GM12878 (cell line): ENCODE measurements at regions of chr4 and their contacts with region 1.

Region 1: DNA sequence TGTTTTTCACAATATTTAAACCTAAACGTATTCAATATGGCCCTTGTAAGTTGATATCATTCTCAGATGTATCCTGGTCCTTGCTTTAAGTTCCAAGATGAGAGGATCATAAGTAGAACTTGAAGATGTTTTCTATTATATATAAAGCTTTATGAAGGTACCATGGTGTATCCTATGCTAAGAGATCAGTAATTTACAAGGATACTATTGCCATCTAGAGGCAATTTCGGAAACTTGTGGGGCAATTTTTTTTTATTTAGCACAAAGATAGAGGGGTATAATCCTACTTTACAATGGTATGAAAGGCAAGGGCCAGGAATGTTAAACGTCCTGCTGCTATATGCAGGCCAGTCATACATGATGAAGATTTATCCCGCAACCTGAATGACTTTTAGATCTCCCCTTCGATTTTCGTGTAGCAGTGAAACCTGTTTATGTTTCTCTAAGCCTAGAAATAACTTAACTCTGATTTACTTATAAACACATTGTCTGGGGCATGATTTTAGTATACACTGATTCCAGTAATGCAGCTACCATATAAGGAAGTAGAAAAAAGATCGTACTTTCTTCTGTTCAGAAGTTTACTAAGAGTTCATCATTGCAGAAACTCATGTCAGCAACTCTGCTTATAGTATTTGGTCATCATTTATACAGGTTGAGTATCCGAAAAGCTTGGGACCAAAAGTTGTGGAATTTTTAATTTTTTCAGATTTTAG is 2.6 kb downstream of the SLC25A31 start:
- DNase-seq: peak; percentile 12
- ATAC-seq: peak; percentile 92
- H3K4me3 ChIP-seq: no peak overlapping the region
- H3K27ac ChIP-seq: no peak overlapping the region
- H3K4me1 ChIP-seq: no peaks in the 10 kb centered on the region
- H3K27me3 ChIP-seq: no peaks in the 10 kb centered on the region; a peak in 1 of 4 replicates
- CTCF ChIP-seq: peak; percentile 44 to 73 (median 58); a peak in 5 of 6 replicates
- EP300 ChIP-seq: no peak
- POLR2A ChIP-seq: no peak
- RAD21 ChIP-seq: peak; percentile 83

Region 2: GRCh38 chr4:127538016-127538415 is 194.8 kb before region 1 on chr4:
- CTCF ChIA-PET with region 1: interaction called, 4 read pairs
- POLR2A ChIA-PET with region 1: no interaction called
- RAD21 ChIA-PET with region 1: no interaction called
- SMC1A ChIA-PET with region 1: no interaction called
- in situ Hi-C with region 1: no loop called
- intact Hi-C with region 1: loop called (anchors 5 kb)
- DNase-seq: no peak
- ATAC-seq: no peak
- H3K4me3 ChIP-seq: no peak overlapping the region
- H3K27ac ChIP-seq: no peak overlapping the region
- H3K4me1 ChIP-seq: no peaks in the 10 kb centered on the region
- H3K27me3 ChIP-seq: no peaks in the 10 kb centered on the region
- CTCF ChIP-seq: no peak
- EP300 ChIP-seq: no peak
- POLR2A ChIP-seq: no peak
- RAD21 ChIP-seq: no peak

Region 3: GRCh38 chr4:127586922-127587571 is 145.7 kb before region 1 on chr4:
- CTCF ChIA-PET with region 1: interaction called, 16 read pairs
- POLR2A ChIA-PET with region 1: no interaction called
- RAD21 ChIA-PET with region 1: interaction called, 4 read pairs
- SMC1A ChIA-PET with region 1: interaction called, 5 read pairs
- in situ Hi-C with region 1: no loop called
- intact Hi-C with region 1: no loop called
- DNase-seq: no peak
- ATAC-seq: peak; percentile 96
- H3K4me3 ChIP-seq: no peak overlapping the region
- H3K27ac ChIP-seq: no peak overlapping the region
- H3K4me1 ChIP-seq: no peaks in the 10 kb centered on the region
- H3K27me3 ChIP-seq: no peaks in the 10 kb centered on the region
- CTCF ChIP-seq: peak; percentile 55 to 78 (median 74)
- EP300 ChIP-seq: no peak
- POLR2A ChIP-seq: no peak
- RAD21 ChIP-seq: peak; percentile 48

Region 4: DNA sequence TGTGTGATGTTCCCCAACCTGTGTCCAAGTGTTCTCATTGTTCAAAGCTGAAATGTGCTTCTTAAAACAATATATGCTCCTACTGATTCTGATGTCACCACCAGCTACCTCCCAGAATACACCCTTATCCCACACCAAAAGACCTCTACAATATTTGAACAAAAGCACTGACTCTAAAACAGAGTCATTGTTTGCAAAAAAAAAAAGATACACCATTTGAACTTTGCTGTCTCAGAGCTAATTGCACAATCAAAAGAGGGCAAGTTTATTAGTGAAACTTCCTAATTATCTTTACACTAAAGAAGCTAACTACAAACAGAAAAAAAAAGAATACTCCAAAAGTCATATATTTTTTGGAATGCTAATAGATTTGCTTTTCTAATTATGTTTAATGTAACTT is 134.1 kb before region 1 on chr4:
- CTCF ChIA-PET with region 1: interaction called, 137 read pairs
- POLR2A ChIA-PET with region 1: interaction called, 3 read pairs
- RAD21 ChIA-PET with region 1: interaction called, 11 read pairs
- SMC1A ChIA-PET with region 1: interaction called, 86 read pairs
- in situ Hi-C with region 1: loop called (anchors 5 kb)
- intact Hi-C with region 1: no loop called
- DNase-seq: no peak
- ATAC-seq: no peak
- H3K4me3 ChIP-seq: no peak overlapping the region
- H3K27ac ChIP-seq: no peak overlapping the region
- H3K4me1 ChIP-seq: no peaks in the 10 kb centered on the region
- H3K27me3 ChIP-seq: no peaks in the 10 kb centered on the region; a peak in 2 of 4 replicates
- CTCF ChIP-seq: no peak
- EP300 ChIP-seq: no peak
- POLR2A ChIP-seq: no peak
- RAD21 ChIP-seq: no peak

Region 5: GRCh38 chr4:127604949-127605709 is 127.6 kb before region 1 on chr4:
- CTCF ChIA-PET with region 1: interaction called, 137 read pairs
- POLR2A ChIA-PET with region 1: interaction called, 3 read pairs
- RAD21 ChIA-PET with region 1: interaction called, 57 read pairs
- SMC1A ChIA-PET with region 1: interaction called, 86 read pairs
- in situ Hi-C with region 1: loop called (anchors 5 kb)
- intact Hi-C with region 1: loop called (anchors 1 kb)
- DNase-seq: no peak
- ATAC-seq: 0 out of 3 replicates have a peak, but pooled peaks have one; percentile 21
- H3K4me3 ChIP-seq: no peak overlapping the region
- H3K27ac ChIP-seq: no peak overlapping the region
- H3K4me1 ChIP-seq: no peaks in the 10 kb centered on the region
- H3K27me3 ChIP-seq: no peaks in the 10 kb centered on the region; a peak in 2 of 4 replicates
- CTCF ChIP-seq: peak; percentile 9 to 51 (median 25); a peak in 3 of 6 replicates
- EP300 ChIP-seq: no peak
- POLR2A ChIP-seq: no peak
- RAD21 ChIP-seq: peak; percentile 56

Region 6: GRCh38 chr4:127775843-127776242 is 43.1 kb after region 1 on chr4:
- CTCF ChIA-PET with region 1: interaction called, 14 read pairs
- POLR2A ChIA-PET with region 1: no interaction called
- RAD21 ChIA-PET with region 1: no interaction called
- SMC1A ChIA-PET with region 1: interaction called, 5 read pairs
- in situ Hi-C with region 1: no loop called
- intact Hi-C with region 1: no loop called
- DNase-seq: no peak
- ATAC-seq: peak; percentile 51
- H3K4me3 ChIP-seq: no peak overlapping the region
- H3K27ac ChIP-seq: no peak overlapping the region
- H3K4me1 ChIP-seq: peaks cover 6% of the 10 kb centered on the region; the same call in 1 of the 2 replicates
- H3K27me3 ChIP-seq: no peaks in the 10 kb centered on the region
- CTCF ChIP-seq: no peak
- EP300 ChIP-seq: no peak
- POLR2A ChIP-seq: no peak
- RAD21 ChIP-seq: no peak

Region 7: GRCh38 chr4:127788517-127788916 is 55.7 kb after region 1 on chr4:
- CTCF ChIA-PET with region 1: interaction called, 9 read pairs
- POLR2A ChIA-PET with region 1: no interaction called
- RAD21 ChIA-PET with region 1: interaction called, 4 read pairs
- SMC1A ChIA-PET with region 1: interaction called, 17 read pairs
- in situ Hi-C with region 1: no loop called
- intact Hi-C with region 1: no loop called
- DNase-seq: no peak
- ATAC-seq: peak; percentile 59
- H3K4me3 ChIP-seq: no peak overlapping the region
- H3K27ac ChIP-seq: no peak overlapping the region
- H3K4me1 ChIP-seq: no peaks in the 10 kb centered on the region
- H3K27me3 ChIP-seq: no peaks in the 10 kb centered on the region
- CTCF ChIP-seq: peak in 2 of 3 experiments; percentile 16 to 19; a peak in 2 of 6 replicates
- EP300 ChIP-seq: no peak
- POLR2A ChIP-seq: no peak
- RAD21 ChIP-seq: no peak

Region 8: GRCh38 chr4:127959794-127960193 is 227.0 kb after region 1 on chr4:
- CTCF ChIA-PET with region 1: no interaction called
- POLR2A ChIA-PET with region 1: no interaction called
- RAD21 ChIA-PET with region 1: no interaction called
- SMC1A ChIA-PET with region 1: no interaction called
- in situ Hi-C with region 1: no loop called
- intact Hi-C with region 1: no loop called
- DNase-seq: no peak
- ATAC-seq: no peak
- H3K4me3 ChIP-seq: no peak overlapping the region
- H3K27ac ChIP-seq: no peak overlapping the region
- H3K4me1 ChIP-seq: peaks cover 5% of the 10 kb centered on the region; the same call in 1 of the 2 replicates
- H3K27me3 ChIP-seq: no peaks in the 10 kb centered on the region
- CTCF ChIP-seq: no peak
- EP300 ChIP-seq: no peak
- POLR2A ChIP-seq: no peak
- RAD21 ChIP-seq: no peak